ENCODE measurements at regions of chr3 and their contacts with region 1.

Region 1: DNA sequence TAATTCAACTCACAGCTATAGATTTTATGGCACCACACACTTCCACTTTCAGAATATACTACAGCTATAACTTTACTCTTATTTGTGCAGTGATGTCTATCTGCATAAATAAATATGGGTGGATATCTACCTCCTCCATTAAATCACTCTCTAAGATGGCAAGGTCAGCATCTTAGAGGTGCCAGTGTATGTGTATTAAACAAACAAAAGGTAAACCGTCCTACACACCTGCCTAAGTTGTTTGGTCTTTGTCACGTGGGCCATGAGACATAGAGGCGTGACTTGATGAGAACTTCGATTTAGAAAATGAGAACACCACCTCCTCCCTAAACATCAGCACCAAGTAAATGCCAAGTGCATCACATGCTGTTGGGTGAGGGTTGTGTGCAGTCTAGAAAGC is 310.6 kb downstream of the GRM7 start:
- DNase-seq: no peak
- H3K4me3 ChIP-seq: no peak overlapping the region
- H3K27ac ChIP-seq: no peak overlapping the region
- H3K4me1 ChIP-seq: no peaks in the 10 kb centered on the region
- H3K27me3 ChIP-seq: no peaks in the 10 kb centered on the region
- CTCF ChIP-seq: no peak
- POLR2A ChIP-seq: no peak

Region 2: GRCh38 chr3:7469866-7470265 is 298.4 kb after region 1 on chr3:
- intact Hi-C with region 1: no loop called
- DNase-seq: no peak
- H3K4me3 ChIP-seq: no peak overlapping the region
- H3K27ac ChIP-seq: no peak overlapping the region
- H3K4me1 ChIP-seq: no peaks in the 10 kb centered on the region
- H3K27me3 ChIP-seq: no peaks in the 10 kb centered on the region
- CTCF ChIP-seq: no peak
- POLR2A ChIP-seq: no peak

Region 3: DNA sequence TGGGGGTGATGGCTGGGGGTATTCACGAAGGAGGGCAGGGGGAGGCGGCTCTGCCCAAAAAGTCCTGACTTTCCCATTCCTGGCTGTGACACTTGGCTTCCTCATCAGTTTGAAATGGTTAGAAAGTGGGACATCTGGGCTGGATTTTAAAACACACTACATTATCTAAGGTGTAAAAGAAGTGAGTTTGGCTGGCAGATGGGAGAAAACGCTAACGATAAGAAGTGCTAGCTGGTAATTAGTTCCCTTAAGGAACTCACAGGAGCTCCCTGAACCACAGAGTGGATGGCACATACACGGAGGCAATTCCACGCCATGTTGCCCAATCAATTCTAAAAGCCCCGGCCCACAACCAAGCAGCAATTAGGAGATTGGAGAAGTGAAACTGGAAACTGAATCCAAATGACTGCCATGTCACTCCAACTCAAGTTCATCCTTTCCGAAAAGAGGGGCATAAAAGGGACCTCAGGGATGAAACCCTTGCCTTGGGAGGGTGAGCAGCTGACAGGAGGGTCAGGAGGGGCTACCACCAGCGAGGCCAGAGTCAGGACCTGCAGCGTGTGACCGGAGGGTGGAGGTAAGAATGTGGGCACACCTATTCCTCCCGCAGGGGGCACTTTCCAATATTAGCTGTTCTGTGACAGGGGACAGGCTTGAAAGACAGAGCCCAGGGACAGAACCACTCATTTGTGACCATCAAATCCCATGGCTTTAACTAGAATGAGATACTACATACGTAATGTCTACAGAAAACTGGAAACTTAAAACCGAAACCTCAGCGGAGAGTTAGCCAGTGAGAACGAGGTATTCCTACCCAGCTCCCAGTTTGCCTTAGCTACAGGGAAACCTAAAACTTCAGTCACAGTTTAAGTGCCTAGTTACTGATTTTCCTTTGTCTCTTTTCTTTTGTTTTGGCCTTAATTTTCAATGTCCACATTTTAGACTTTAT is 1693.2 kb after region 1 on chr3:
- intact Hi-C with region 1: loop called (anchors 5 kb)
- DNase-seq: no peak
- H3K4me3 ChIP-seq: peak overlapping the region in 1 of 3 donors; percentile 19
- H3K27ac ChIP-seq: no peak overlapping the region
- H3K4me1 ChIP-seq: no peaks in the 10 kb centered on the region
- H3K27me3 ChIP-seq: no peaks in the 10 kb centered on the region
- CTCF ChIP-seq: no peak
- POLR2A ChIP-seq: no peak